ENCODE measurements at regions of chr9 and their contacts with region 1.

Region 1: DNA sequence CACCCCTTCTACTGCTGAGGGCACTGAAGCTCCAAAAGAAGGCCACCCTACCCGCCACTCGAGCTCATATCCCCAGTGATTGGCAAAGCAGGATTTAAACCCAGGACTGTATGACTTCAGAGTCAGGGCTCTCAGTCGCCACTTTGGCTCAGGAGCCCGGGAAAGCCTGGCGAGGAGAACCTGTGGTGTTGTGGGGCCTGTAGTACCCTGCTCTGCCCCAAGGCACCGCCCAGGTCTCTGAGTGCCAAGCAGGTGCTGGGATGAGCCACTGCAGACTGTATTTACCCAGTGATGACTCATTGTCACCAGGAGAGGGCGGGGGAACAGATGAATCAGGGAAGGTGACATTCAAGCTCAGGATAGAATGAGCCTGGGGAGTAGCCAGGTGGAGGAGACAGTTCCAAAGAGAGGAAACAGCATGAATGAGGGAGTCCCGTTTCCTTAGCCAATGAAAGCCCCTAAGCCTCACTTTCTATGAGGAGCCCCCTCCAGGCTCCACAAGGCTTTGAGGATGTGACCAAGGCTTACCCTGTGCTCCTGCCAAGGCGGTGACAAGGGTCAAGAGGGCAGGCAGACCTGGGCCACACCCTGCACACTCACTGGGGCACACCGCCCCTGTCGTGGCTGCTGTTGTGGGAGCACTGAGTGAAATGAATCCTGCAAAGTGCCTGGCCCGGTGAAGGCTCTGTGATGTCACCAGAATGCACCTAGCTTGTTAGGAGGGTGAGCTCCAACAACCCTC is 17.8 kb upstream of the DPM2 start:
- DNase-seq: peak; percentile 63 to 91 (median 78)
- ATAC-seq: peak; percentile 86
- H3K4me3 ChIP-seq: peak overlapping the region; percentile 4
- H3K4me3 Mint-ChIP-seq: peak overlapping the region; percentile 78
- H3K27ac ChIP-seq: peak overlapping the region; percentile 53 to 65
- H3K27ac Mint-ChIP-seq: peak overlapping the region; percentile 97
- H3K4me1 ChIP-seq: peaks cover 84% of the 10 kb centered on the region
- H3K4me1 Mint-ChIP-seq: peaks cover 93% of the 10 kb centered on the region
- H3K27me3 ChIP-seq: no peaks in the 10 kb centered on the region
- H3K27me3 Mint-ChIP-seq: no peaks in the 10 kb centered on the region
- CTCF ChIP-seq: peak; percentile 71

Region 2: GRCh38 chr9:126673689-126674364 is 1281.6 kb before region 1 on chr9:
- CTCF ChIA-PET with region 1: no interaction called
- POLR2A ChIA-PET with region 1: no interaction called
- intact Hi-C with region 1: no loop called
- DNase-seq: no peak
- ATAC-seq: no peak
- H3K4me3 ChIP-seq: no peak overlapping the region
- H3K4me3 Mint-ChIP-seq: no peak overlapping the region
- H3K27ac ChIP-seq: no peak overlapping the region
- H3K27ac Mint-ChIP-seq: no peak overlapping the region
- H3K4me1 ChIP-seq: no peaks in the 10 kb centered on the region
- H3K4me1 Mint-ChIP-seq: peaks cover 4% of the 10 kb centered on the region
- H3K27me3 ChIP-seq: peaks cover 60 to 83% of the 10 kb centered on the region in 2 experiments
- H3K27me3 Mint-ChIP-seq: peaks cover 62% of the 10 kb centered on the region
- CTCF ChIP-seq: no peak

Region 3: GRCh38 chr9:127754099-127755050 is 201.1 kb before region 1 on chr9:
- CTCF ChIA-PET with region 1: no interaction called
- POLR2A ChIA-PET with region 1: no interaction called
- intact Hi-C with region 1: no loop called
- DNase-seq: no peak
- ATAC-seq: no peak
- H3K4me3 ChIP-seq: no peak overlapping the region
- H3K4me3 Mint-ChIP-seq: no peak overlapping the region
- H3K27ac ChIP-seq: no peak overlapping the region
- H3K27ac Mint-ChIP-seq: no peak overlapping the region
- H3K4me1 ChIP-seq: peaks cover 9% of the 10 kb centered on the region
- H3K4me1 Mint-ChIP-seq: peaks cover 13% of the 10 kb centered on the region
- H3K27me3 ChIP-seq: no peaks in the 10 kb centered on the region
- H3K27me3 Mint-ChIP-seq: no peaks in the 10 kb centered on the region
- CTCF ChIP-seq: no peak

Region 4: GRCh38 chr9:127943731-127944144 is 11.7 kb before region 1 on chr9:
- CTCF ChIA-PET with region 1: interaction called, 74 read pairs
- POLR2A ChIA-PET with region 1: interaction called, 28 read pairs
- intact Hi-C with region 1: loop called in 1 of 2 experiments (anchors 1 kb)
- DNase-seq: peak; percentile 59 to 89 (median 72)
- ATAC-seq: peak; percentile 74
- H3K4me3 ChIP-seq: no peak overlapping the region
- H3K4me3 Mint-ChIP-seq: peak overlapping the region; percentile 12
- H3K27ac ChIP-seq: peak overlapping the region in 1 of 2 donors; percentile 14
- H3K27ac Mint-ChIP-seq: peak overlapping the region; percentile 88
- H3K4me1 ChIP-seq: peaks cover 58% of the 10 kb centered on the region
- H3K4me1 Mint-ChIP-seq: peaks cover 58% of the 10 kb centered on the region
- H3K27me3 ChIP-seq: no peaks in the 10 kb centered on the region
- H3K27me3 Mint-ChIP-seq: no peaks in the 10 kb centered on the region
- CTCF ChIP-seq: peak; percentile 77

Region 5: DNA sequence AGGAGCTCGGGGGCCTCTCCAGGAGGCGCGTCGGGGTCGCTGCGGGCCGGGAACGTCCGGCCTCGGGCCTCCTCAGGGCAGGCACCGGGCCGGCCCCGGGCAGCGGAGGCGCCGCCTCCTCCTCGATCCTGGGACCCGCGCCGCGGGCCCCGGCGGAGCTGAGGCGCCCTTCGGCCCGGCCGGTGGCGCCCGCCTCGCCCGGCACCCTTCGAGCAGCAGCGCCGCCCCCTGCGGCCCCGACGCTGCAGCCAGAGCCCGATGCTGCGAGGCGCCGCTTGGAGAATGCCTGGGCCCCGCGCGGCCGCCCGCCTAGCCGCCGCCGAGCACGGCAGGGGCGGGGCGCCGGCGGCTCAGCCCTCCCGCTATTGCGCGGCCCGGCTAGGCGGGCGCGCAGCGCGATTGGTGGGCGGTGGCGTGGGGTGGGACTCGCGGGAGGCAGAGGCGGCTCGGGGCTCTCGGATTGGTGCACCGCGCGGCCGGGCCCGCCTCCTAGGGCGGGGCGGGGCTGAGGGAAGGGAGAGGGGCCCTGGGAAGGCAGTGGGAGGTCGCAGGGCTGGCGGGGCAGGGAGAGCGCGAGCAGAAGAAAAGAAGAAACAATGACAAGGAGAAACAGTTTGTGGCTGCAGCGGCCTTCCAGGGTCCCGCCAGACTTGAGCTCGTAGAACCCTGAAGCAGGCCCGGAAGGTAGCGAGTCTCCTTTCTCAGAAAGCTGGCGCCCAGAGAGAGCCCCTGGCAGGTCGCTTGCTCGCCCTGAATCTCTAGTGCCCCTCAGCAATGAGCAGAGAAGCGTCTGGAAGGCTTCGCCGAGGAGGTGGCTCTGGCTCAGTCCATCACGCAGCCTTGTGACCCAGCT is 25.5 kb after region 1 on chr9 and contains the start of gene EEIG1:
- CTCF ChIA-PET with region 1: interaction called, 24 read pairs
- POLR2A ChIA-PET with region 1: interaction called, 272 read pairs
- intact Hi-C with region 1: loop called (anchors 1 to 2 kb)
- DNase-seq: peak; percentile 95 to 99 (median 97)
- ATAC-seq: peak; percentile 88
- H3K4me3 ChIP-seq: peak within 1 kb of the TSS; percentile 67
- H3K4me3 Mint-ChIP-seq: peak within 1 kb of the TSS; percentile 96
- H3K27ac ChIP-seq: peak within 1 kb of the TSS; percentile 53 to 57
- H3K27ac Mint-ChIP-seq: peak within 1 kb of the TSS; percentile 99
- H3K4me1 ChIP-seq: peaks cover 58% of the 10 kb centered on the region
- H3K4me1 Mint-ChIP-seq: peaks cover 47% of the 10 kb centered on the region
- H3K27me3 ChIP-seq: no peaks in the 10 kb centered on the region
- H3K27me3 Mint-ChIP-seq: no peaks in the 10 kb centered on the region
- CTCF ChIP-seq: no peak
- total RNA-seq, gene EEIG1: 440 to 463 TPM

Region 6: GRCh38 chr9:128026773-128027541 is 71.5 kb after region 1 on chr9:
- CTCF ChIA-PET with region 1: interaction called, 71 read pairs
- POLR2A ChIA-PET with region 1: interaction called, 1,020 read pairs
- intact Hi-C with region 1: no loop called
- DNase-seq: peak in 13 of 14 experiments; percentile 30 to 75 (median 48)
- ATAC-seq: peak; percentile 10
- H3K4me3 ChIP-seq: peak overlapping the region; percentile 50
- H3K4me3 Mint-ChIP-seq: peak overlapping the region; percentile 80
- H3K27ac ChIP-seq: peak overlapping the region; percentile 93 to 94
- H3K27ac Mint-ChIP-seq: peak overlapping the region; percentile 94
- H3K4me1 ChIP-seq: peaks cover 100% of the 10 kb centered on the region
- H3K4me1 Mint-ChIP-seq: peaks cover 92% of the 10 kb centered on the region
- H3K27me3 ChIP-seq: no peaks in the 10 kb centered on the region
- H3K27me3 Mint-ChIP-seq: no peaks in the 10 kb centered on the region
- CTCF ChIP-seq: no peak

Region 7: DNA sequence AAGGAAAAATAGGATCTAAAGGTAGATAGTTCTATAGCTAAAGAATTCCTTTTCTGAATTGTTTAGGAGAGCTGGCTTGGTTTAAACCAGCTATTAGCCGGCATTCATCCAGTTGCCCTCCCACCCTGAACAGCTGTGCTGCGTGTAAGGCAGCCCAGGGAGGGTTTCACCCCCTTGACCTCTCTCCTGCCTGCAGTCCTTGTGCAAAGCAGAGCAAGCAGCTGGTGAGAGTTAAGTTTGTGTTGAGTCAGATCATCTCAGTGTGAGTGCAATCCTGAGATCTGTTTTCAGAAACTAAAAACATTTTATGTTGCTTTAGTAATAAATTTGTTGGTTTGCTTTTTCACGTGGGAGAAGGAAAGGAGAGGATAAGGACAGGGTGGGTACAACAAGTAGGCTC is 125.6 kb after region 1 on chr9:
- CTCF ChIA-PET with region 1: interaction called, 3 read pairs
- POLR2A ChIA-PET with region 1: no interaction called
- intact Hi-C with region 1: loop called in 1 of 2 experiments (anchors 5 kb)
- DNase-seq: no peak
- ATAC-seq: no peak
- H3K4me3 ChIP-seq: no peak overlapping the region
- H3K4me3 Mint-ChIP-seq: no peak overlapping the region
- H3K27ac ChIP-seq: no peak overlapping the region
- H3K27ac Mint-ChIP-seq: peak overlapping the region; percentile 67
- H3K4me1 ChIP-seq: peaks cover 47% of the 10 kb centered on the region
- H3K4me1 Mint-ChIP-seq: peaks cover 57% of the 10 kb centered on the region
- H3K27me3 ChIP-seq: no peaks in the 10 kb centered on the region
- H3K27me3 Mint-ChIP-seq: no peaks in the 10 kb centered on the region
- CTCF ChIP-seq: no peak

Region 8: GRCh38 chr9:128117613-128118471 is 162.4 kb after region 1 on chr9:
- CTCF ChIA-PET with region 1: interaction called, 3 read pairs
- POLR2A ChIA-PET with region 1: no interaction called
- intact Hi-C with region 1: loop called (anchors 5 to 10 kb)
- DNase-seq: peak; percentile 92 to 99 (median 98)
- ATAC-seq: peak; percentile 96
- H3K4me3 ChIP-seq: no peak overlapping the region
- H3K4me3 Mint-ChIP-seq: peak overlapping the region; percentile 44
- H3K27ac ChIP-seq: no peak overlapping the region
- H3K27ac Mint-ChIP-seq: peak overlapping the region; percentile 16
- H3K4me1 ChIP-seq: peaks cover 15% of the 10 kb centered on the region
- H3K4me1 Mint-ChIP-seq: peaks cover 6% of the 10 kb centered on the region
- H3K27me3 ChIP-seq: no peaks in the 10 kb centered on the region
- H3K27me3 Mint-ChIP-seq: no peaks in the 10 kb centered on the region
- CTCF ChIP-seq: peak; percentile 100